RWPE1 (cell line): ENCODE measurements at regions of chr1 and their contacts with region 1.

Region 1: DNA sequence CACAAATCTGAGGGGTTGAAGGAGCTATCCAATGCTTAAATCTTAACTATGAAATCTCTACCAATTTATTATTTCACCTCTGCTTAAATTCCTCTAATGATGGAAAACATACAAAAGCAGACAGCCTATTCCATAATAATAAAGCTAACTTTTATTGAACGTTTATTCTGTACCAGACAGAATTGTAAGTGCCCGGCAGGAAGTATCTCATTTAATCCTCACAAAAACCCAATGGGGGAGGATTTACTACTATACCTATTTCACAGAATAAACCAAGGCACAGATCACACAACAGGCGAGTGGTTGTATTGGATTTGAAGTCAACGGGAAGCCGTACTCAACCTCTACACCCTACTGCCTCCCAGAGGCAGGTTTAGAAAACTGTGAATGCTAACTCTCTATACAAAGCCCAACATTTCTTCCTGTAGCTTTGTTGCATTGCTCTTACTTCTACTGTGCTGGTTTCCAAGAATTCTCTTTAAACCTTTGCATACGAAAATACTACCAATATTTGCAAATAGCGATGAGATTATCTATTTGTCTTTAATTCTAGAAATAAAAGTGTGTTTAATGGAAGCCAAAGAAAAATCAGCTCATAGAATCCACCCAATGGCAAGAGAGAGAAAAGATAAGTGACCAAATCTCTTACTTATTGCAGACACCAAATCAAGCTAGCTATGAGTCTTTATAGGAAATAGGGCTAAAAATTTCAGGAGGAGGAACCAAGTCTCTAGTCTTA is 33.5 kb upstream of the C1orf53 start:
- DNase-seq: peak; percentile 82
- H3K27ac ChIP-seq: no peak overlapping the region
- CTCF ChIP-seq: no peak; the same call in 1 of the 2 replicates

Region 2: GRCh38 chr1:197614916-197615692 is 253.8 kb before region 1 on chr1:
- CTCF ChIA-PET with region 1: interaction called, 65 read pairs
- POLR2A ChIA-PET with region 1: no interaction called
- DNase-seq: peak; percentile 31
- H3K27ac ChIP-seq: no peak overlapping the region
- CTCF ChIP-seq: peak; percentile 73

Region 3: GRCh38 chr1:197768014-197768791 is 100.7 kb before region 1 on chr1:
- CTCF ChIA-PET with region 1: interaction called, 11 read pairs
- POLR2A ChIA-PET with region 1: no interaction called
- DNase-seq: no peak
- H3K27ac ChIP-seq: no peak overlapping the region
- CTCF ChIP-seq: no peak

Region 4: GRCh38 chr1:197775282-197776262 is 93.3 kb before region 1 on chr1 and contains the start of gene DENND1B:
- CTCF ChIA-PET with region 1: interaction called, 12 read pairs
- POLR2A ChIA-PET with region 1: no interaction called
- DNase-seq: peak; percentile 80
- H3K27ac ChIP-seq: peak within 1 kb of the TSS; percentile 96
- CTCF ChIP-seq: no peak

Region 5: GRCh38 chr1:197915862-197916499 is 47.1 kb after region 1 on chr1:
- CTCF ChIA-PET with region 1: interaction called, 14 read pairs
- POLR2A ChIA-PET with region 1: no interaction called
- DNase-seq: peak; percentile 88
- H3K27ac ChIP-seq: no peak overlapping the region
- CTCF ChIP-seq: peak; percentile 85

Region 6: GRCh38 chr1:197937892-197938291 is 69.0 kb after region 1 on chr1:
- CTCF ChIA-PET with region 1: no interaction called
- POLR2A ChIA-PET with region 1: no interaction called
- DNase-seq: no peak
- H3K27ac ChIP-seq: no peak overlapping the region
- CTCF ChIP-seq: no peak